Activated CD4-positive, alpha-beta T cell treated with anti-CD3 and anti-CD28 coated beads for 36 hours (primary cell): ENCODE measurements at regions of chr17 and their contacts with region 1.

Region 1: DNA sequence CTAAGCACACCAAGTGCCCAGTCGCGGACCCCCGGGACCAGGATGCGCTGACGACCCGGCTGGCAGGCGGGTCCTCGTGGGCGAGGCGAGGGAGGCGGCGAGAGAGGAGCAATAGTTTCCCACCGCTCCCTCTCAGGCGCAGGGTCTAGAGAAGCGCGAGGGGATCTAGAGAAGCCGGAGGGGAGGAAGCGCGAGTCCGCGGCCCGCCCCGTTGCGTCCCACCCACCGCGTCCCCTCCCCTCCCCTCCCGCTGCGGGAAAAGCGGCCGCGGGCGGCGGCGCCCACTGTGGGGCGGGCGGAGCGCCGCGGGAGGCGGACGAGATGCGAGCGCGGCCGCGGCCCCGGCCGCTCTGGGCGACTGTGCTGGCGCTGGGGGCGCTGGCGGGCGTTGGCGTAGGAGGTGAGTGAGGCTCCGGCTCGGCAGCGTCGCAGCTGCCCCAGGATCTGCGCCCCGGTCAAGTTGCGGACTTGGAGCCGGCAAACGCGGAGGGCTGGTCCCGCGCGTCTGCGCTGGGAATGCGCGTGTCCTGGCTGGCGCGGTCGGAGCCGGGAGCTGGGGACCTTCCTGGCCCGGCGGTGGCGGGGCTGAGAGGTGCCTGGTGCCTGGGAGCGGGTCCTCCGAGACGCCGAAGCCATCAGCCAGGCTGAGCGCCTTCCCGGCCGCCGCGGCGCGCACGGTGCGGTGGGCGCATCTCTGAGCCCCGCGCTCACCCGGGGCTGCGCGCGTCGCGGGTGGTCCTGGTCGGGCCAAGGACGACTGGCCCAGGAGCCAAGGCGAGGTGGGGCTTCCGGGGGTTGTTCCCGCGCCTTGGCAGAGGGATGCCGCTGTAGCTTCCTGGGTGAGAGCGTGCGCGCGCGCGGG is at the start of gene ITGB3:
- DNase-seq: peak; percentile 78
- ATAC-seq: peak; percentile 88
- H3K4me3 Mint-ChIP-seq: peak within 1 kb of the TSS; percentile 69
- H3K27ac Mint-ChIP-seq: no peak within 1 kb of the TSS
- H3K4me1 Mint-ChIP-seq: peaks cover 2% of the 10 kb centered on the region
- H3K27me3 Mint-ChIP-seq: peaks cover 42% of the 10 kb centered on the region
- total RNA-seq, gene ITGB3: 0.04 TPM in 1 of 2 experiments, not detected in the other

Region 2: DNA sequence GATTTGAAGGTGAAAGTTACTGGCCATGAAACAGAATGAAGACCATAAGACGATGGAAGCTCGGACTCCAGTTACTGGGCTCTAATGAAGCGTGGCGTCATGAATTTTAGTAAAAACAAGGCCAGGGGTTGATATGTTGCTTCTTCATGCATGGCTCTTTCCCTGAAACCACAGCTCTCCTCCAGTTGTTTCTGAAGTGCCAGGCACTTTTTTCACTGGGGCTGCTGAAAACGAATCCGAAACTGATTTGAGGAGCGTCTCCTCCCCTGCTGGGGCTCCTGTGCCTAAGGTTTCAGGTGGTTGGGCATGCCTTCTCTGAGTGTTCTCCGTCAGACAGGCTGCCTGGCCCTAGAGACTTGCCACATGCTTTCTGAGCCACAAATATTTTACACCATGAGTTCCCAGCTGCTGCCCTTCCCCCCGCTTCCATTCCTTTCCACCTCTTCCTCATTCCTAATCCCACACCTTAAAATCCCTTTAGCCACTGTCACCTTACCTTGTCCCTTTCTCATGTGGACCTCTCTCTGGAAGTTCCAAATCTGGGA is 48.3 kb before region 1 on chr17:
- CTCF ChIA-PET with region 1: no interaction called
- POLR2A ChIA-PET with region 1: no interaction called
- intact Hi-C with region 1: loop called in 1 of 2 experiments (anchors 1 kb)
- DNase-seq: peak; percentile 82
- ATAC-seq: peak; percentile 67
- H3K4me3 Mint-ChIP-seq: peak overlapping the region; percentile 59
- H3K27ac Mint-ChIP-seq: peak overlapping the region; percentile 90
- H3K4me1 Mint-ChIP-seq: peaks cover 46% of the 10 kb centered on the region
- H3K27me3 Mint-ChIP-seq: no peaks in the 10 kb centered on the region

Region 3: DNA sequence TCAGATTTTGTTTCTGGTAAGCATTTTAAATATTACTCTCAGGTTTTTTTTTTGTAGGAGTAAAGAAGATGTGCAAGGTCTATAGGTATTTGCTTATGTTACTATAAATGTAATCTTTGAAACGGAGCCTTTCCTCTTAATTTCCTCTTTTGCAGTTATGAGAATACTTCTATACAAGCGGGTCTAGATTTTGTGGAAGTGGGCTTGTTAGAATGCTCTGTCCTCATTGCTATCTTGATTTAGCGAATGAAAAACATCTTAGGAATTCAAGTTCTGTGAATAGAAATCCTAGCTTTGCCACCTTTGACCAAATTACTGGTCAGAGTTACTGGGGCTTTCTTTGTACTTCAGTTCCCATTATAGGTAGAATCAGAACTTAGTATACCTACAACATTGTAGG is 150.2 kb after region 1 on chr17:
- CTCF ChIA-PET with region 1: no interaction called
- POLR2A ChIA-PET with region 1: no interaction called
- intact Hi-C with region 1: no loop called
- DNase-seq: no peak
- ATAC-seq: no peak
- H3K4me3 Mint-ChIP-seq: no peak overlapping the region
- H3K27ac Mint-ChIP-seq: no peak overlapping the region
- H3K4me1 Mint-ChIP-seq: no peaks in the 10 kb centered on the region
- H3K27me3 Mint-ChIP-seq: no peaks in the 10 kb centered on the region